MCF 10A (cell line): ENCODE measurements at regions of chr6 and their contacts with region 1.

Region 1: DNA sequence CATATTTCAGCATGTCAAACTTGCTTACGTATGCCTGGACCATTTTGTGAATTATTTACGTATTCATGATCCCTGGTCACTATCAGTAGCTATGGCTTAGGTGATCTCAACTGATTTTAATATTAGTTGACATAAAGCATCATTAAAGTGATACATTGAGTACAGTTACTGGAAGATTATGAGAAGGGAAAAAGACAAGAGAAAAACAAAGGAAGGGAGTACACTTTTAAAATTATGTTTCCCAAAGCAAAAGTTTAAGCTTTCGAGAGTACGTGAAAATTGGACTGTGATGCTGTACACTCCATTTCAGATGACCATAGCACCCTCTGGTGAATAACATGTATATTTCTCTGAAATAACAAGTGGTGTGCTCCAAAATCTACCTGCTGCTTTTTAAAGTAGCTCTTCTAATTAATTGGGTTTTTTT is 215.0 kb upstream of the HSF2 start:
- DNase-seq: peak; percentile 29
- H3K4me3 Mint-ChIP-seq: no peak overlapping the region
- H3K27ac Mint-ChIP-seq: no peak overlapping the region
- H3K4me1 Mint-ChIP-seq: no peaks in the 10 kb centered on the region
- H3K27me3 Mint-ChIP-seq: peaks cover 64% of the 10 kb centered on the region
- CTCF ChIP-seq: no peak

Region 2: DNA sequence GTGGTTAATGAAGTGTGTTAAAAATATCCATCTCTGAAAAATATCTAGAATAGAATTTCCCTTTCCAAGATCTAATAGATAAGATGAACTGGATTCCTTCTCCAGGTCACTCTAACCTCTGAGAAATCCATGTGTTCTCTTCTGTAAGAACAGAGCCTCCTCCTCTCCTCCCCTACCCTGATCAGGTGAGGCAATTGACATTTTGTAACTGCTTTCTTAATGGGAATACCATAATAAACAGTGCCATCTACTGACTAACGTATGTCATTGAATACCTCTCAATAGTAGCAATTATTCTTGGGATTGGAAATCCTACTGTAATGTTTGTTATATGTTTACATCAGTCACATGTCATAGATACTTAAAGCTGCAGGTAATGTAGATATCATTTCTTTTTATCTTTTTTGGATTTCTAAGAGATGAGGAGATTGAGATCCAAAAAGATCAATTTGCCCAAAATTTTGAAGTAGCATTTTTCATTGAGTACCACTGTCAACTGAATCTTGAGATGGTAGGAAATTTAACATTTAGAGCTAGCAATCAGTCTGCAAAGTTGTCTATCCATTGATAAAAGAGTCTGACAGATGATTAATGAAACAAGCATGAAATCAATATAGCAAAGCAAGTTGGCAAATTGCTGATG is 150.8 kb before region 1 on chr6:
- CTCF ChIA-PET with region 1: interaction called, 4 read pairs
- POLR2A ChIA-PET with region 1: no interaction called
- intact Hi-C with region 1: loop called (anchors 5 kb)
- DNase-seq: peak; percentile 69
- H3K4me3 Mint-ChIP-seq: no peak overlapping the region
- H3K27ac Mint-ChIP-seq: no peak overlapping the region
- H3K4me1 Mint-ChIP-seq: peaks cover 14% of the 10 kb centered on the region
- H3K27me3 Mint-ChIP-seq: no peaks in the 10 kb centered on the region
- CTCF ChIP-seq: peak; percentile 57

Region 3: GRCh38 chr6:122202576-122203137 is 18.2 kb after region 1 on chr6:
- CTCF ChIA-PET with region 1: interaction called, 10 read pairs
- POLR2A ChIA-PET with region 1: no interaction called
- intact Hi-C with region 1: no loop called
- DNase-seq: no peak
- H3K4me3 Mint-ChIP-seq: no peak overlapping the region
- H3K27ac Mint-ChIP-seq: no peak overlapping the region
- H3K4me1 Mint-ChIP-seq: no peaks in the 10 kb centered on the region
- H3K27me3 Mint-ChIP-seq: peaks cover 55% of the 10 kb centered on the region
- CTCF ChIP-seq: no peak

Region 4: DNA sequence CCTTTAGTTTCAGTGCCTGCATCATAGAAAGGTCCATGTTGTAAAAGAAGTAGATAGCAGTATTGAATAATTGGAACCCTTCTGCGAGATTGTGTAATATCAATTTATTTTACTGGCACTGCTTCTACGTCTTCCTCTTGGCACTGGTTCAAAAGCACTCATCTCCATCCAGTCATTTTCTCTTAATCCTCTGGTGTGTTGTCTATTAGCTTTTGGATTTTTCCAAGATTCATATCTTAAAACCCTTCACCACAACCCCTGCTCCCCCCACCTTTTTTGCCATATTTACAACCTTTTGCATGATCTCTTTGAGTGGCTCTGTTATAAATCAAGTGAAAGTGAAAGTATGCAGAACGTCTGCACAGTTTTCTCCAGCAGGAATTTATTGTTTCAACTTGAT is 138.4 kb after region 1 on chr6:
- CTCF ChIA-PET with region 1: no interaction called
- POLR2A ChIA-PET with region 1: no interaction called
- intact Hi-C with region 1: no loop called
- DNase-seq: peak; percentile 42
- H3K4me3 Mint-ChIP-seq: peak overlapping the region; percentile 66
- H3K27ac Mint-ChIP-seq: no peak overlapping the region
- H3K4me1 Mint-ChIP-seq: peaks cover 13% of the 10 kb centered on the region
- H3K27me3 Mint-ChIP-seq: peaks cover 48% of the 10 kb centered on the region
- CTCF ChIP-seq: no peak